Calu3 (cell line): ENCODE measurements at regions of chr11 and their contacts with region 1.

Region 1: DNA sequence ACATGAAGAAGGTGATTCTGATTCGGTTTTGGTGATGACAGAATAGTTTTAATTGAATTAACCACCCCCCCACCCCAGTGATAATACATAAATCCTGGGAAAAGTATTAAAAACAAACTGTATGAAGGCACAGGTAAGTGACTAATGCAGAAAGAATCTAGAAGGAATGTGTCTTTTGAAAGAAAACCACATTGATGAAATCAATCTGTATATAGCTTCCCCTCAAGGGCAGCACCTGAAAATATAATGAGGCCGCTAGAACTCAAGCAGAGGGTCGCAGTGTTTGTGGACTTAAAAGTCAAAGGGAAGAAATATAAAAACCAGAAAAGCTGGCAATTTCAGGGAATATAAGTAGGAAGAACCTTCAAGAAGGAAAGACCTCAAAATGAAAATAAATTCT is 580.5 kb upstream of the CHORDC1 start:
- DNase-seq: peak; percentile 4
- H3K4me3 Mint-ChIP-seq: peak overlapping the region; percentile 53
- H3K27ac Mint-ChIP-seq: peak overlapping the region; percentile 80
- H3K4me1 Mint-ChIP-seq: peaks cover 28% of the 10 kb centered on the region
- H3K27me3 Mint-ChIP-seq: no peaks in the 10 kb centered on the region
- CTCF ChIP-seq: no peak

Region 2: GRCh38 chr11:90171359-90171758 is 632.0 kb before region 1 on chr11:
- CTCF ChIA-PET with region 1: interaction called, 13 read pairs
- intact Hi-C with region 1: no loop called
- DNase-seq: no peak
- H3K4me3 Mint-ChIP-seq: no peak overlapping the region
- H3K27ac Mint-ChIP-seq: no peak overlapping the region
- H3K4me1 Mint-ChIP-seq: no peaks in the 10 kb centered on the region
- H3K27me3 Mint-ChIP-seq: no peaks in the 10 kb centered on the region
- CTCF ChIP-seq: no peak

Region 3: DNA sequence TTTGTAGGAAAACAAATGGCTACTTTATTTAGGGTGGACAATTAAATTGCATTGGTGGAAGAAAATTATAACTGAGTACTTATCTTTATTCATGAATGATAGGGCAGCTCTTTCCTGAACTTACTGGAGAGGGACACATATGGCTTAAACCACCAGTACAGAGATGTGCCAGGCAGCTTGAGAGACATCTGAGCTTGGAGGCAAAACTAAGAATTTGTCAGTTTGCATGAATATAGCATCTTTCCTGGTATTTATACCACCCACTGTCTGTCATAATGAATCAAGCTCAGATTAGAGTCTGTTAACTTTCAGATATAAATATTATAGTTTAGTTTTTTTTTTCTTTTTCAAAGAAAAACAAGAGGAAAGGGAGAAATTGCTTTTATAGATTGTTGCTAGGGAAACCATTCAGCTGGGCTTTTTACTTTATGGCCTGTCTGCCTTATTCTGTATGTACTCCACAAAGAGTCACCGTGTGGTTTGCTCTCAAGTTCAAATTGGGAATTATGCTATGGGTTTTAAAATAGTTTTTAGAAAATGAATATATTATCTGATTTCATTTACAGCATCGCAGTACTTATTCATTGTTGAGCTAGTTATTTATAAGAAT is 103.5 kb before region 1 on chr11:
- CTCF ChIA-PET with region 1: interaction called, 10 read pairs
- intact Hi-C with region 1: no loop called
- DNase-seq: no peak
- H3K4me3 Mint-ChIP-seq: no peak overlapping the region
- H3K27ac Mint-ChIP-seq: no peak overlapping the region
- H3K4me1 Mint-ChIP-seq: no peaks in the 10 kb centered on the region
- H3K27me3 Mint-ChIP-seq: no peaks in the 10 kb centered on the region
- CTCF ChIP-seq: no peak

Region 4: GRCh38 chr11:90836031-90836430 is 32.7 kb after region 1 on chr11:
- CTCF ChIA-PET with region 1: no interaction called
- intact Hi-C with region 1: loop called (anchors 5 kb)
- DNase-seq: no peak
- H3K4me3 Mint-ChIP-seq: no peak overlapping the region
- H3K27ac Mint-ChIP-seq: no peak overlapping the region
- H3K4me1 Mint-ChIP-seq: peaks cover 11% of the 10 kb centered on the region
- H3K27me3 Mint-ChIP-seq: no peaks in the 10 kb centered on the region
- CTCF ChIP-seq: no peak